ENCODE measurements at regions of chr3 and their contacts with region 1.

Region 1: GRCh38 chr3:197186887-197187588 is 111.4 kb downstream of the DLG1 start:
- H3K4me3 Mint-ChIP-seq: no peak overlapping the region
- H3K27ac Mint-ChIP-seq: no peak overlapping the region
- H3K4me1 Mint-ChIP-seq: no peaks in the 10 kb centered on the region
- H3K27me3 Mint-ChIP-seq: no peaks in the 10 kb centered on the region

Region 2: GRCh38 chr3:196942226-196942914 is 244.7 kb before region 1 on chr3 and contains the start of gene NCBP2:
- intact Hi-C with region 1: no loop called
- H3K4me3 Mint-ChIP-seq: peak within 1 kb of the TSS; percentile 87
- H3K27ac Mint-ChIP-seq: peak within 1 kb of the TSS; percentile 90
- H3K4me1 Mint-ChIP-seq: peaks cover 55% of the 10 kb centered on the region
- H3K27me3 Mint-ChIP-seq: no peaks in the 10 kb centered on the region

Region 3: DNA sequence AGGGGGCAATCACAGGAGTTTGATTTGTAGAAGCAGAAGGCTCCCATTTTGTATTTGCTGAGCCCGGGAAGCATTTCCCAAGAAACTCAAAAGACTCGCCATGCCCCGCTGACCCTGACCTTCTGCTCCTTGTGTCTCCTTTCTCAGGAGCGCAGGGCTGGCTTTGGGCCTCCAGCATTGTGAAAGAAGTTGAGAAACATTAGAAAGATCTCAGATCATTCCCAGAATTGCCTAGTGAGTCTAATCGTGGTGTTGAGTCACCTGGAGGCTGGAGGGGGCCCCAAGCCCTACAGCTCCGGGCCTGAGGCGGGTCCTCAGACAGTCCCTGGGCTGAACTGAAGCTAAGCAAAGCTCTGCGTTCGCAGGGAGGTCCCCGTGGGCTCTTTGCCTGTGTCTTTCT is 207.5 kb before region 1 on chr3:
- intact Hi-C with region 1: loop called (anchors 1 kb)
- H3K4me3 Mint-ChIP-seq: no peak overlapping the region
- H3K27ac Mint-ChIP-seq: no peak overlapping the region
- H3K4me1 Mint-ChIP-seq: no peaks in the 10 kb centered on the region
- H3K27me3 Mint-ChIP-seq: peaks cover 7% of the 10 kb centered on the region

Region 4: GRCh38 chr3:197002701-197003454 is 184.2 kb before region 1 on chr3:
- intact Hi-C with region 1: loop called (anchors 2 kb)
- H3K4me3 Mint-ChIP-seq: peak overlapping the region; percentile 75
- H3K27ac Mint-ChIP-seq: peak overlapping the region; percentile 82
- H3K4me1 Mint-ChIP-seq: peaks cover 41% of the 10 kb centered on the region
- H3K27me3 Mint-ChIP-seq: peaks cover 25% of the 10 kb centered on the region

Region 5: DNA sequence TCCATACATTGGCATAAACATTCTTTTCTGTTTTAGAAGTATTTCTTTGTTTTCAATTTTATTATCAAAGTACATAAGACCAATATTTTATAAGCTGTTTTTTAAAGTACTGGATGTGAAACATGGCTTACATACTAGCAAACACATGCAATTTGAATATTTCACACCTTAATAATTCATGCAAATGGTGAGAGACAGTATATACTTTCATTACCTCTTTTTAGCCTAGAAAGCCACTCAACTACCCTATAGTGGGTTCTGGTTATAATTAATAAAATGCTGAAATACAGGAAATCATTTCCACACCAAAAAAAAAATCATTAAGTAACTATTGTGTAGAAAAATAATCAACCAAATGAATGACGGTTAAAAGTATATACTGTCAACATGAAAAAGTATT is 119.0 kb before region 1 on chr3:
- intact Hi-C with region 1: loop called (anchors 10 kb)
- H3K4me3 Mint-ChIP-seq: no peak overlapping the region
- H3K27ac Mint-ChIP-seq: no peak overlapping the region
- H3K4me1 Mint-ChIP-seq: peaks cover 7% of the 10 kb centered on the region
- H3K27me3 Mint-ChIP-seq: no peaks in the 10 kb centered on the region